ENCODE measurements at regions of chr5 and their contacts with region 1.

Region 1: GRCh38 chr5:150560401-150561193 is 52.7 kb downstream of the NDST1 start:
- DNase-seq: peak; percentile 76 to 95
- H3K4me3 ChIP-seq: no peak overlapping the region
- H3K4me1 ChIP-seq: no peaks in the 10 kb centered on the region
- H3K27me3 ChIP-seq: no peaks in the 10 kb centered on the region

Region 2: GRCh38 chr5:150656191-150657132 is 95.9 kb after region 1 on chr5:
- in situ Hi-C with region 1: loop called (anchors 5 kb)
- DNase-seq: peak; percentile 78 to 88
- H3K4me3 ChIP-seq: peak overlapping the region; percentile 48
- H3K4me1 ChIP-seq: peaks cover 5% of the 10 kb centered on the region
- H3K27me3 ChIP-seq: no peaks in the 10 kb centered on the region

Region 3: DNA sequence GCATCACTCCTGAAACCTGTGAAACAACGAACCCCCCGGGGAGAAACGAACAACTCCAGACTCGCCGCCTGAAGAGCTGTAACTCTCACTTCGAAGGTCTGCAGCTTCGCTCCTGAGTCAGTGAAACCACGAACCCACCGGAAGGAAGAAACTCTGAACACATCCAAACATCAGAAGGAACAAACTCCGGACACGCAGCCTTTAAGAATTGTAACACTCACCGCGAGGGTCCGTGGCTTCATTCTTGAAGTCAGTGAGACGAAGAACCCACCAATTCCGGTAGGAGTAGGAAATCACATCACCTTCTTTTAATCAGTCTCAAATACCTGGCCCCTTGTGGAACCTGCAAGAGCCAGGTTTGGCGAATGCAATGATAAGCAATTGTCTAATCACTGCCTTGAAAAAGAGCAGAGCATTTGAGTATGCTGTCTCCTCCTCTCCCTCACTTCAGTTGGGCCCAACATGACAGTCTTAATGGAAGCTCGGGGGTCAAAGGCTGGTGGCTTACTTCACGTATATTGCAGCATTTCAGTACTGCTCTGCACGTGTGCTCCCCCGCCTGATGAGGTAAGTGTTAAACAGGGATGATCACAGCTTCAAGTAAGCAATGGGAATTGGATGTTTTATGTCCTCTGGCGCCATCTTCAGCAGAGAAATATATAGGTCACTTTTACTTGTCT is 286.2 kb after region 1 on chr5:
- in situ Hi-C with region 1: loop called (anchors 5 kb)
- DNase-seq: peak; percentile 68 to 77
- H3K4me3 ChIP-seq: no peak overlapping the region
- H3K4me1 ChIP-seq: 0 out of 2 replicates have a peak, but pooled peaks cover 3% of the 10 kb centered on the region
- H3K27me3 ChIP-seq: peaks cover 7% of the 10 kb centered on the region

Region 4: DNA sequence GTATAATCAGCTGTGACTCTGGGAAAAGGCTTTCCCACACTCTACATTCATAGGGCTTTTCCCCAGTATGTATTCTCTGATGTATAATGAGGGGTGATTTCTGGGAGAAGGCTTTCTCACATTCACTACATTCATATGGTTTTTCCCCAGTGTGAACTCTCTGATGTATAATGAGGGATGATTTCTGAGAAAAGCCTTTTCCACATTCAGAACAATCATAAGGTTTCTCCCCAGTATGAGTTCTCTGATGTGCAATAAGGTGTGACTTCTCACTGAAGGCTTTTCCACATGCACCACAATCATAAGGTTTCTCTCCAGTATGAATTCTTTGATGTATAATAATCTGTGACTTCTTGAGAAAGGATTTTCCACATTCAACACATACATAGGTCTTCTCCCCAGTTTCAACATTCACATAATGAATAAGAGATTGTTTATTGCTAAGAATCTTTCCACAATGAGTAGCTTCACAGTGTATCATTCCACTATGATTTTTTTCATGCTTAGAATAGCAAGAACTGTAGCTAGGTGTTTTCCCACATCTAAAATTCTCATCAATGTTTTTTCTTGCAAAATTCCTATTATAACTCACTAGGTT is 370.9 kb after region 1 on chr5:
- in situ Hi-C with region 1: no loop called
- DNase-seq: no peak
- H3K4me3 ChIP-seq: no peak overlapping the region
- H3K4me1 ChIP-seq: no peaks in the 10 kb centered on the region
- H3K27me3 ChIP-seq: no peaks in the 10 kb centered on the region